Endothelial cell of umbilical vein (primary cell): ENCODE measurements at regions of chrX and their contacts with region 1.

Region 1: DNA sequence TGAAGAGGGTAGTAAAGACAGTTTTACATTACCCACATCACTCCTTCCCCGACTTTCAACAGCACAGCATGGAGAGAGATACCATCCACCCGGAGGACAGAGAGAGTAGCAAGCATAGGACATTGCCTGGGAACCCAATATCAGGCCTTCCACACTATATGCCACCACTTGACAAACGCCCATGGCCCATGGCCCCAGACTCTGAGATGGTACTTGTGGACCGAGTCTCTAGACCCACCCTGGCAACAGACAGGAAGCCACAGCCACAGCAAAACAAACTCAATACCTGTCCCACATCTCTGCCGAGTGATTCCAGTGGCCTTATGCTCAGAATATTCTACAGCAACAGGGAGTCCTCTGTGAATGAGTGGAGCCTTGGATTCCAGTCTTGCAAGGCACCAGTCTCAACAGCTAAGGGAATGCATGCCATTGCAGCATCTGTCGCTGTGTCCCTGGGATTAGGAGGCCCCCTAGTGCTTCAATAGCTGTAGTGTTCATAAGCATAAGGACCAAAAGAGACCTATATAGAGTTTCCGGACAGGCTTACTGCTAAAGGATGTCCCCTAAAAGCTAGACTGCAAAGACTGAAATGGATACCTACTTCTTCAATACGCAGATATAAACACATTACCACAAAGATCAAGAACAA is 14.7 kb upstream of the CT55 start:
- DNase-seq: peak; percentile 30
- H3K4me3 ChIP-seq: no peak overlapping the region
- H3K27ac ChIP-seq: no peak overlapping the region
- H3K4me1 ChIP-seq: no peaks in the 10 kb centered on the region
- H3K27me3 ChIP-seq: no peaks in the 10 kb centered on the region
- CTCF ChIP-seq: peak; percentile 32 to 36
- POLR2A ChIP-seq: no peak

Region 2: DNA sequence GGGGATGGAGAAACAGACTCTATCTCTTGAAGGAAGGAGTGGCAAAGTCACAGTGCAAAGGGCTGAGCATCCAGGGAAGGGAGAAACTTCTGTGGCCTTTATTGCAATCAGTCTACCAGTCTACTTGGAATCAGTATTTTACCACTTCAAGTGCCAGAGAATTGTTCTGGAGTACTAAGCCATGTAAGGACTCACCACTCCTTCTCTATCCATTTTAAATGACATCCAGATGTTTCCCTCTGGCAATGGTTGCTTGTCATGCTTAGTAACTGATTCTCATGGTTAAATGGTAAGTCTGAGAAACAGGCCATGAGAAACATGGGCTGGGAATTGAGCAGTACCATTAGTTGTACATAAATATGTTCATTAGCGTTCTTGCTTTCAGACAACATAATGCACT is 216.2 kb before region 1 on chrX:
- CTCF ChIA-PET with region 1: no interaction called
- POLR2A ChIA-PET with region 1: no interaction called
- dilution Hi-C with region 1: no loop called
- intact Hi-C with region 1: loop called (anchors 1 kb)
- DNase-seq: no peak
- H3K4me3 ChIP-seq: no peak overlapping the region
- H3K27ac ChIP-seq: no peak overlapping the region
- H3K4me1 ChIP-seq: no peaks in the 10 kb centered on the region
- H3K27me3 ChIP-seq: no peaks in the 10 kb centered on the region
- CTCF ChIP-seq: no peak
- POLR2A ChIP-seq: no peak

Region 3: GRCh38 chrX:135081693-135082404 is 104.1 kb before region 1 on chrX:
- CTCF ChIA-PET with region 1: no interaction called
- POLR2A ChIA-PET with region 1: no interaction called
- dilution Hi-C with region 1: no loop called
- intact Hi-C with region 1: no loop called
- DNase-seq: no peak
- H3K4me3 ChIP-seq: no peak overlapping the region
- H3K27ac ChIP-seq: no peak overlapping the region
- H3K4me1 ChIP-seq: no peaks in the 10 kb centered on the region
- H3K27me3 ChIP-seq: peaks cover 2 to 5% of the 10 kb centered on the region in 2 experiments
- CTCF ChIP-seq: no peak
- POLR2A ChIP-seq: no peak

Region 4: DNA sequence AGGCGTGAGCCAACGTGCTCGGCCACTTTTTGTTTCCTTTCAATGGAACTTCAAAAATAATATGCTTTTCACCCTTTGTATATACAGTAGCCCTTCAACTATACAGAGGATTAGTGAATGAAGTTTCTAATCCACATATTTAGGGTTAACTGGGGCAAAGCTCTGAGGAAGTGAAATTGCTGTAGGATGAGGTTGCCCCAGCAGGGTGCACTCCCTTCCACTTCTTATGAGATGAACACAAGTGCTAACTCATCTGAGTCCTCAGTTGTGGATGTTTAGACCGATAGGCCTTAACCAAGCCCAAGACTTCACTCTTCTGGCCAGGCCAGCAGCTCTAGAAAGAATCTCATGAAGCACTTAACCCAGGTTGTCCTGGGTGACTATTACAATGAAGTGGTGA is 14.4 kb after region 1 on chrX:
- CTCF ChIA-PET with region 1: no interaction called
- POLR2A ChIA-PET with region 1: no interaction called
- dilution Hi-C with region 1: no loop called
- intact Hi-C with region 1: no loop called
- DNase-seq: no peak
- H3K4me3 ChIP-seq: no peak overlapping the region
- H3K27ac ChIP-seq: no peak overlapping the region
- H3K4me1 ChIP-seq: no peaks in the 10 kb centered on the region
- H3K27me3 ChIP-seq: no peaks in the 10 kb centered on the region
- CTCF ChIP-seq: no peak
- POLR2A ChIP-seq: no peak

Region 5: GRCh38 chrX:135421537-135421931 is 235.6 kb after region 1 on chrX:
- CTCF ChIA-PET with region 1: interaction called, 11 read pairs
- POLR2A ChIA-PET with region 1: no interaction called
- dilution Hi-C with region 1: no loop called
- intact Hi-C with region 1: no loop called
- DNase-seq: peak; percentile 76
- H3K4me3 ChIP-seq: peak overlapping the region in 1 of 3 experiments; percentile 34
- H3K27ac ChIP-seq: no peak overlapping the region
- H3K4me1 ChIP-seq: no peaks in the 10 kb centered on the region
- H3K27me3 ChIP-seq: peaks cover 0 to 2% of the 10 kb centered on the region in 2 experiments
- CTCF ChIP-seq: no peak
- POLR2A ChIP-seq: no peak

Region 6: GRCh38 chrX:135463937-135464336 is 278.0 kb after region 1 on chrX:
- CTCF ChIA-PET with region 1: interaction called, 10 read pairs
- POLR2A ChIA-PET with region 1: no interaction called
- dilution Hi-C with region 1: no loop called
- intact Hi-C with region 1: no loop called
- DNase-seq: peak; percentile 1
- H3K4me3 ChIP-seq: no peak overlapping the region
- H3K27ac ChIP-seq: no peak overlapping the region
- H3K4me1 ChIP-seq: no peaks in the 10 kb centered on the region
- H3K27me3 ChIP-seq: no peaks in the 10 kb centered on the region
- CTCF ChIP-seq: peak; percentile 15 to 38
- POLR2A ChIP-seq: no peak

Region 7: DNA sequence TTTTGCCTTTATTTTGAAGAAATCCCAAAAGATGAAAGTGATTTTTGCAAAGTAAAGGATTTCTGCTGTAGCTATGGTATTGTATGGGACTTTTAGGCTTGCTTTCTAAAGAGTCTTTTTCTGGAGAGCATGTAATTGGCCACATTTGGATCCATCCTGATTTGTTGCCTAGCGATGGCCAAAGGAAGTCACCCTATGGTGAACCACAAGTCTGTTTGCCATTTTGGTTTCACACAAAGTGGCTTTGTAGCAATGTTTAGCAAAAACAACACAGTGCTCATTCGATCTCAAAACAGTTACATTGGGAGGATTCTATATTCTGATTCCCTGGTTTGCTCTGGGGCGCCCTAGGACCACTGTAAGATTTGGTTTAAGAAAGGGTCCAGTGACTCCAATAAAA is 290.5 kb after region 1 on chrX:
- CTCF ChIA-PET with region 1: interaction called, 16 read pairs
- POLR2A ChIA-PET with region 1: no interaction called
- dilution Hi-C with region 1: no loop called
- intact Hi-C with region 1: no loop called
- DNase-seq: no peak
- H3K4me3 ChIP-seq: no peak overlapping the region
- H3K27ac ChIP-seq: no peak overlapping the region
- H3K4me1 ChIP-seq: no peaks in the 10 kb centered on the region
- H3K27me3 ChIP-seq: peaks cover 0 to 2% of the 10 kb centered on the region in 2 experiments
- CTCF ChIP-seq: no peak
- POLR2A ChIP-seq: no peak

Region 8: DNA sequence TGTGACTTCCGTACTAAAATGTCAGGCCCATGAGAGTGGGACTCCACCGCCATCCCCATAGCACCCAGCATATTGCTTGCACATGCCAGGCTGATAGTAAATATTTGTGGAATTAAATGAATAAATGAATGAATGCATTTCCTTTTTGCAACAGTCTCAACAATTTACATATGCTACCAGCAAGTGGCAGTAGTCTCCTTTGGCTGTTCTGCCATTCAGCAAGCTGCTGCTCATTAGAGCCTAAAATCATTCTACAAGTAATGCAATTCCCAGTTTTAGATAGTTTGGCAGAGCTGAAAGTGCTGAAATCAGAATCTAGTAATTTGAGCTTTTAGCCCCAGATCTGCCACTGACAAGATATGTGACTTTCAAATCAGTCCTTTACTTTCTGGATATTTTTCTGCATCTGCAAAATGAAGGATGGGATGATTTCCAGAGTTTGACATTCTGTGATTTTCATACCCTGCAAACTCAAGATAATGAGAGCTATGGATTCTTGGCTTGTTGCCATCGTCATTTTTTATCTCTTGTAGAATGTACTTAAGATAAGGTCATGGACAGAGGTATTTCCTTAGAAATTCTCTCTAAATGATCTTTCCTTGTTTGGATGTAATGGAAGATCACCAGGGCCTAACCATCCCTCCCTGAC is 298.8 kb after region 1 on chrX:
- CTCF ChIA-PET with region 1: interaction called, 16 read pairs
- POLR2A ChIA-PET with region 1: no interaction called
- dilution Hi-C with region 1: no loop called
- intact Hi-C with region 1: no loop called
- DNase-seq: peak; percentile 46
- H3K4me3 ChIP-seq: no peak overlapping the region
- H3K27ac ChIP-seq: no peak overlapping the region
- H3K4me1 ChIP-seq: no peaks in the 10 kb centered on the region
- H3K27me3 ChIP-seq: no peaks in the 10 kb centered on the region
- CTCF ChIP-seq: peak; percentile 32 to 45
- POLR2A ChIP-seq: no peak